ENCODE measurements at regions of chr17 and their contacts with region 1.

Region 1: GRCh38 chr17:18857864-18858566 is at the start of gene PRPSAP2:
- DNase-seq: peak; percentile 95
- ATAC-seq: peak; percentile 79
- H3K4me3 Mint-ChIP-seq: peak within 1 kb of the TSS; percentile 89
- H3K27ac Mint-ChIP-seq: peak within 1 kb of the TSS; percentile 85
- H3K4me1 Mint-ChIP-seq: peaks cover 53% of the 10 kb centered on the region
- H3K27me3 Mint-ChIP-seq: no peaks in the 10 kb centered on the region
- total RNA-seq, gene PRPSAP2: 57.3 to 57.8 TPM

Region 2: GRCh38 chr17:18896146-18896545 is 38.1 kb after region 1 on chr17:
- CTCF ChIA-PET with region 1: interaction called, 8 read pairs
- POLR2A ChIA-PET with region 1: interaction called, 13 read pairs
- DNase-seq: no peak
- ATAC-seq: no peak
- H3K4me3 Mint-ChIP-seq: no peak overlapping the region
- H3K27ac Mint-ChIP-seq: no peak overlapping the region
- H3K4me1 Mint-ChIP-seq: peaks cover 30% of the 10 kb centered on the region
- H3K27me3 Mint-ChIP-seq: no peaks in the 10 kb centered on the region

Region 3: DNA sequence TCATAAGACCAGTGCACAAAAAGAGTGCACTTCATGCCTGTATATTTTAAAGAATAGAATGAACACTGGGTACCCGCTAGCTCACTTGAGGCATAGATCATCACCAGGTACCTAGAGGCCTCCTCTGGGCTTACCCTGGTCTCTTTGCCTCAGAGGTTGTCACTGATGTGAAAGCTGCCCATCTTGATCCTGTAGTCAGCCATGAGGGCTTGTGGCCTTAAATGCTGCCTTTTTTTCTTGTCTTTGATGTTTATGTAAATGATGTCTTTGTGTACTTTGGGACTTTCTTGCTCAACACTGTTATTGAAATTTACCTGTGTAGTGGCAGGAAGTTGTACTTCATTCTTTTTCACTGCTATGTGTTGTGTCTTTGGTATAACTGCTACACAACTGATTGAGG is 67.2 kb after region 1 on chr17:
- CTCF ChIA-PET with region 1: interaction called, 10 read pairs
- POLR2A ChIA-PET with region 1: interaction called, 3 read pairs
- DNase-seq: no peak
- ATAC-seq: no peak
- H3K4me3 Mint-ChIP-seq: no peak overlapping the region
- H3K27ac Mint-ChIP-seq: peak overlapping the region; percentile 65
- H3K4me1 Mint-ChIP-seq: peaks cover 43% of the 10 kb centered on the region
- H3K27me3 Mint-ChIP-seq: no peaks in the 10 kb centered on the region

Region 4: GRCh38 chr17:19019036-19019941 is 161.3 kb after region 1 on chr17:
- CTCF ChIA-PET with region 1: no interaction called
- POLR2A ChIA-PET with region 1: no interaction called
- DNase-seq: no peak
- ATAC-seq: no peak
- H3K4me3 Mint-ChIP-seq: no peak overlapping the region
- H3K27ac Mint-ChIP-seq: no peak overlapping the region
- H3K4me1 Mint-ChIP-seq: peaks cover 8% of the 10 kb centered on the region
- H3K27me3 Mint-ChIP-seq: no peaks in the 10 kb centered on the region

Measured in activated CD8-positive, alpha-beta T cell treated with anti-CD3 and anti-CD28 coated beads, Interleukin-2, amount 10 ng/mL, durations not matched to agents 7 days and 5 days (primary cell).